Body of pancreas (tissue), 4 donors: ENCODE measurements at regions of chr17 and their contacts with region 1.

Region 1: DNA sequence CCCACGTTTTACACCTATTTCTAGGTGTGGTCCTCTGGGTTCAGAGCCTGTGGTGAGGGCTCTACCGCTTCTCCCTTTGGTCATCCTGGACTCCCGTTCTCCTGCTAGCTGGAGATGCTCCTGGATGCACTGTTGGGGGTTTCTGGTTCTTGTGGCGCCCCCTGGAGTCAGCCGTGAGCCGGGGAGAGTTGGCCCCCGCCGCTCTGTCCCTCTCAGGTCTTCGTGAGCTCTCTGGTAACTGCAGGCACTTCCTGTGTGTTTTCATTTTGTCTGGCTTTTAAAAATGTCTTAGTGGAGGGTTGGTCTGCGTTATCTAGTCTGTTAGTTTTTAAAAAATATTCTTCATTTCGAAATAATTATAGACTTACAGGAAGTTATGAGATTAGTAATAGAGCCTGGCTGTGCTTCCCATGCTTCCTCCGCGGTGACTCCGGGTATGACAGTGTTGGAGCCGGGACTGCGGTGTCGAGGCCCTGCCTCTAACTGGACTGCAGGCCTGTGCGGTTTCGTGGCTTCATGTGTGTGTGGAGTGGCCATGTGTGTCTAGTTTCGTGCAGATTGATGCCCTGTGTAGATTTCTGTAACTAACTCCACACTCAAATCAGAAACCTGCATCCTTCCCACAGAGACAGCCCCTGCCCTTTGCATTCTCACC is 78.0 kb upstream of the ZNF750 start:
- DNase-seq: peak in 2 of 4 donors; percentile 33 to 42
- ATAC-seq: no peak
- H3K4me3 ChIP-seq: no peak overlapping the region
- H3K27ac ChIP-seq: no peak overlapping the region
- H3K4me1 ChIP-seq: peaks cover 16% of the 10 kb centered on the region
- H3K27me3 ChIP-seq: no peaks in the 10 kb centered on the region
- CTCF ChIP-seq: peak in 5 of 7 experiments; percentile 14 to 41 (median 25)
- POLR2A ChIP-seq: no peak

Region 2: DNA sequence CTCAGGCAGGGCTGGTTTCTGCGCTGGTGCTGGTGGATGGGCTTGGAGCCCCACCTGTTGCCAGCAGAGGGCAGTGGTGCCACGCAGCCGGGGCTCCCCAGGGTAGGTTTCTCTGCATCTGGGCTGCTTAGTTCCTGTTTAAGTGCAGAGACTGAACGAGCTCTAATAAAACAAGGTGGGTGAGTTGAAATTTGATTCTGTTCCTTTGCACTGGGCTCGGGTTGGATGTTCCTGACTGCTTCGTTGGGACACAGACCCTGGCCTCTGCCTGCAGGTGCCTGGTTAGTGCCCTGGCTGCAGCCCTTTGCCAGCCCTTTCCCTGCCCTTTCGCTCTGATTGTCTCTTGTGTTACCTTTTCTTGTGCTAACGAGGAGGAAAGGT is 135.9 kb before region 1 on chr17:
- intact Hi-C with region 1: loop called (anchors 10 kb)
- DNase-seq: peak; percentile 80 to 84 (median 82)
- ATAC-seq: peak; percentile 93
- H3K4me3 ChIP-seq: no peak overlapping the region
- H3K27ac ChIP-seq: peak overlapping the region in 1 of 4 donors; percentile 31
- H3K4me1 ChIP-seq: no peaks in the 10 kb centered on the region
- H3K27me3 ChIP-seq: no peaks in the 10 kb centered on the region
- CTCF ChIP-seq: peak; percentile 93 to 97 (median 96)
- POLR2A ChIP-seq: no peak

Region 3: DNA sequence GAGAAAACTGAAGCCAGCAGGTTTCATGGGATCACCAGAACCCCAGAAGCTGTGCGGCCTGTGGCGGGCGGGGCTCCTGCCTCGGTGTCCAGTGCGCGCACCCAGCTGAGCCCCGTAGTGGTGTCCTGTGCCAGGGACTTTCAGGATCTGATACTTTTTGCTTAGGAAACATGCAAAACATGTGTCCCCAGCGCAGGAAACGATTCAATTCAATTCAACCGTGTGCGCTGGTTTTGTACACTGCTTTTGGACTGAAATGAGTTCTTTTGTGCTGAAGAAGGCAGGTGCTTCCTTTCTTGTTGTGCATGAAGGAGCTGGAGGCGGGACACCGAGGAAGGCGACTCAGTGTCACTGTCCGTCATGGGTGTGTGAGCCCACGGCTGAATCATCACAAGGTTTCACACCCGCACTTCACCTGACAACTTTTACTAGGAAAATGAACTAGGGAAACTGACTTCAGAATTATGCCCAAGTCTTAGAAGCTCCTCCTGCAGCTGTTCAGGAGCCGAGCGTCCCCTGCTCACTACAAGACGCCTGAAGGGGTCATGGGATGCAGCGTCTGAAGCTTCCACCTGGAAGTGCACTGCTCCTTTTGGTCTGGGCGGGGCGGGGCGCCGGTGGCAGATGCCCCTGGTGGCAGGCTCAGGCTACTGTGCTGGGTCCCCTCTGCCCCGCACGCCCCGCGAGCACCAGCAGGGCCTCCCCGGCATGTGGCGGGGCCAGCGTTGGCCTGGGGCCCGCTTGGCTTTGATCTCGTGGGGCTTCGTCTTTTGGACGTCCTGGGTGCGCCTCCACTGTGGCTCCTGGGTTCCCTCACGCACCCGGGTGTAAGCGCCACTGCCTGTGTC is 46.5 kb before region 1 on chr17:
- intact Hi-C with region 1: loop called (anchors 5 kb)
- DNase-seq: no peak
- ATAC-seq: no peak
- H3K4me3 ChIP-seq: no peak overlapping the region
- H3K27ac ChIP-seq: peak overlapping the region in 1 of 4 donors; percentile 49
- H3K4me1 ChIP-seq: peaks cover 2% of the 10 kb centered on the region
- H3K27me3 ChIP-seq: no peaks in the 10 kb centered on the region
- CTCF ChIP-seq: no peak
- POLR2A ChIP-seq: no peak